T-cell (primary cell): ENCODE measurements at regions of chr3 and their contacts with region 1.

Region 1: DNA sequence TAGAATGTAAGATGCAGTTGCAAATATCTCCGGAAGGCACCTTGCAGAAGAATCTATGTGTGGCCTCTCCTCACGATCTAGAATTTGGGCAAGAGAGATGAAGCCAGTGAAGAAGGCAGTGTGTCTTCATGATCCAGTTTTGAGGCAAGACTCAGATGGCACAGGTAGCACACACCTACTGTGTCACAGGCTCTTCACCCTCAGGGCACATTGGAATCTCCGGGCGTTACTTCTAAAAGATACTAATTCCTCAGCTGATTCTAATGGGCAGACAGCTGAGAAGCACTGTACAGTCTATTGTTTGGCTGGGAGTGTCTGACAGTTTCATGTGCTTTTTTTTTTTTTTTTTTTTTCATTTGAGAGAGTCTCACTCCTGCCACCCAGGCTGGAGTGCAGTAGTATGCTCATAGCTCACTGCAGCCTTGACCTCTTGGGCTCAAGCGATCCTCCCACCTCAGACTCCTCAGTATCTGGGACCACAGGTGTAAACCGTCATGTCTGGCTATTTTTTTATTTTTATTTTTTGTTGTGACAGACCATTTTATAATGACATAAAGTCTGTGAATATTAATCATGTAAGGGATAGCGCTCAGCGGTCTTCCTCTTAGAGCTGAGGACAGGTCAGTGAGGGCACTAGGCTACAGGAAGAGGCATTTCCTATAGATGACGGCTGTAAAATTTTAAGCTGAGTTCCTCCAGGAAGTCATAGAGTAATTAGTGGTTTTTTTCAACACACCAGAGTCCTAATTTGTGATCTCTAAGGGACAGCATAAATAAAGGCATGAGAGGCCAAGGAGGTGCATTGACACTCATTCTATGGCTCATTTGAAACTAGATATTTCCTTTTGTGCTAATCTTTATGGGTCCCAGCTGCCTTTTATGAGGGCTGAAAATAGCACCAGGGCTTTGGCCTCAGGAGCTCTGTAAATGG is 4.0 kb downstream of the C3orf52 start:
- DNase-seq: no peak
- ATAC-seq: no peak
- H3K4me3 ChIP-seq: no peak overlapping the region
- H3K4me3 Mint-ChIP-seq: no peak overlapping the region
- H3K27ac ChIP-seq: no peak overlapping the region
- H3K27ac Mint-ChIP-seq: no peak overlapping the region
- H3K4me1 ChIP-seq: peaks cover 15 to 28% of the 10 kb centered on the region in 2 experiments
- H3K4me1 Mint-ChIP-seq: peaks cover 30 to 52% (median 43%) of the 10 kb centered on the region in 3 donors
- H3K27me3 ChIP-seq: peaks cover 0 to 9% of the 10 kb centered on the region in 2 experiments
- H3K27me3 Mint-ChIP-seq: peaks cover 0 to 18% of the 10 kb centered on the region in 2 donors

Region 2: DNA sequence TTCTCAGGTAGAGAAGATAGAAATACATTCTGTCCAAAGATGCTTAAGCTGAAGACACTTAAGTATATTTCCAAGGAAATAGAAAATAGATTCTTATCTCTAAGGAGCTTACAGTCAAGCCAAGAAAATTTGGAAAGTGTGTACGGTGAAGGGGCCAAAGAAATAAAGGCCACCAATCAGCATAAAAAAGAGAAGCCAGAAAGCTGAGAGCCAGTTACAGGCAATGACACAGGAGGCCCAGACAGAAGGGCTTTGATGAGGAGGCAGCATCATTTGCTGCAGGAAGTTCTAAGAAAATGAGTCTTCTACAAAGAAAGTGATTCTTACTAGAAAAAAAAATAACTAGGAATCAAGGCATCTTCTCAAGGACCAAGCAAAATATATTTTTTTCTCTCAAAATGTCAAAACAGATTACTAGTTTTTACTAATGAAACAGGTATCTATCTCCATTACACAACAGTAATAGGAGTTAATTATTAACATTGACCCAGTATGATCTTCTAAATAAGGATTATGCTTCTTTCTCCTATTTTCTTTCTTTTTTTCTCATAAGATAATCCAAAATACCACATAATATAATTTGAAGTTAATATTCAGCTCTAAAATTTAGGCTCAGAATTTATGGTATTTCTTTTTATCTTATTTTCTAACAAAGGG is 313.3 kb before region 1 on chr3:
- CTCF ChIA-PET with region 1: no interaction called
- POLR2A ChIA-PET with region 1: no interaction called
- DNase-seq: no peak
- ATAC-seq: no peak
- H3K4me3 ChIP-seq: no peak overlapping the region
- H3K4me3 Mint-ChIP-seq: no peak overlapping the region
- H3K27ac ChIP-seq: no peak overlapping the region
- H3K27ac Mint-ChIP-seq: no peak overlapping the region
- H3K4me1 ChIP-seq: no peaks in the 10 kb centered on the region
- H3K4me1 Mint-ChIP-seq: no peaks in the 10 kb centered on the region
- H3K27me3 ChIP-seq: no peaks in the 10 kb centered on the region
- H3K27me3 Mint-ChIP-seq: no peaks in the 10 kb centered on the region

Region 3: DNA sequence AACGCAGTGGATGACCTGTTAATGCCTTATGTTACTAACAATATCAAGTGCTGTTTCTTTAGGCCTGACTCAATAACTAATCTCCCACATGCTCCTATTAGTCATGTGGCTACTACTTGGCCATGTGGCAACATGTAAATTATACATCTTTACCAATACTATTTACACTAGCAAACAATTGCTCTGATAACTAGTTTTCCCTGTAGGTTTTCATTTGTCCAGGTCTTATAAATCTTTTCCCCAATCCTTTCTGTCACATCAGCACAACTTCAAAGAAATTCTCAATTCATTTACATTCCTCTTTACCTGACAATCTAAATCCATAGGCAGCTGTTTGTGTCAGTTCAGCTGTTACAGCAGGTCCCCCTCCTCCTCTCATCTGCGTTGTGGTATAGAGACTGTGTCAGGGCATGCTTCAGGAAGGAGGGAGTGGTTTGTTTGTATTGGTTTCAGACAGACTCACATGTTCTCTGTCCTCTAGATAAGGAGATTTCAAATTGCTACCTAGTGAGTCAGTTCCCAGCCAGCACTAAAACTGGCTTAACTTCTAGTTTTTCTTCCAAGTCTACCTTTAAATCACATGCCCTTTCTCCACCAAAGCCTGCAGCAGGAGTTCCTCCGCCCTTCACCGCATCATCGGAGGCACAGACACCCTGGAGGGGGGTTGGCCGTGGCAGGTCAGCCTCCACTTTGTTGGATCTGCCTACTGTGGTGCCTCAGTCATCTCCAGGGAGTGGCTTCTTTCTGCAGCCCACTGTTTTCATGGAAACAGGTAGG is 15.3 kb before region 1 on chr3:
- CTCF ChIA-PET with region 1: no interaction called
- POLR2A ChIA-PET with region 1: interaction called in 1 of 2 experiments, 11 read pairs
- DNase-seq: peak in 18 of 35 experiments; percentile 4 to 60 (median 17)
- ATAC-seq: peak; percentile 77 to 91 (median 84)
- H3K4me3 ChIP-seq: peak overlapping the region in 1 of 2 donors; percentile 32
- H3K4me3 Mint-ChIP-seq: peak overlapping the region; percentile 40 to 66 (median 50)
- H3K27ac ChIP-seq: peak overlapping the region; percentile 43
- H3K27ac Mint-ChIP-seq: peak overlapping the region; percentile 96 to 98
- H3K4me1 ChIP-seq: peaks cover 15 to 24% of the 10 kb centered on the region in 2 experiments
- H3K4me1 Mint-ChIP-seq: peaks cover 45 to 49% (median 47%) of the 10 kb centered on the region in 3 donors
- H3K27me3 ChIP-seq: no peaks in the 10 kb centered on the region
- H3K27me3 Mint-ChIP-seq: peaks cover 0 to 1% of the 10 kb centered on the region in 2 donors

Region 4: GRCh38 chr3:112128843-112129727 is 38.9 kb after region 1 on chr3:
- CTCF ChIA-PET with region 1: no interaction called
- POLR2A ChIA-PET with region 1: no interaction called
- DNase-seq: peak in 34 of 35 experiments; percentile 22 to 86 (median 48)
- ATAC-seq: peak; percentile 76 to 83 (median 80)
- H3K4me3 ChIP-seq: no peak overlapping the region
- H3K4me3 Mint-ChIP-seq: peak overlapping the region in 2 of 3 donors; percentile 2 to 64
- H3K27ac ChIP-seq: peak overlapping the region; percentile 83
- H3K27ac Mint-ChIP-seq: peak overlapping the region; percentile 82
- H3K4me1 ChIP-seq: peaks cover 47 to 75% of the 10 kb centered on the region in 2 experiments
- H3K4me1 Mint-ChIP-seq: peaks cover 88 to 89% (median 89%) of the 10 kb centered on the region in 3 donors
- H3K27me3 ChIP-seq: no peaks in the 10 kb centered on the region
- H3K27me3 Mint-ChIP-seq: no peaks in the 10 kb centered on the region